Natural killer cell (primary cell): ENCODE measurements at regions of chr5 and their contacts with region 1.

Region 1: DNA sequence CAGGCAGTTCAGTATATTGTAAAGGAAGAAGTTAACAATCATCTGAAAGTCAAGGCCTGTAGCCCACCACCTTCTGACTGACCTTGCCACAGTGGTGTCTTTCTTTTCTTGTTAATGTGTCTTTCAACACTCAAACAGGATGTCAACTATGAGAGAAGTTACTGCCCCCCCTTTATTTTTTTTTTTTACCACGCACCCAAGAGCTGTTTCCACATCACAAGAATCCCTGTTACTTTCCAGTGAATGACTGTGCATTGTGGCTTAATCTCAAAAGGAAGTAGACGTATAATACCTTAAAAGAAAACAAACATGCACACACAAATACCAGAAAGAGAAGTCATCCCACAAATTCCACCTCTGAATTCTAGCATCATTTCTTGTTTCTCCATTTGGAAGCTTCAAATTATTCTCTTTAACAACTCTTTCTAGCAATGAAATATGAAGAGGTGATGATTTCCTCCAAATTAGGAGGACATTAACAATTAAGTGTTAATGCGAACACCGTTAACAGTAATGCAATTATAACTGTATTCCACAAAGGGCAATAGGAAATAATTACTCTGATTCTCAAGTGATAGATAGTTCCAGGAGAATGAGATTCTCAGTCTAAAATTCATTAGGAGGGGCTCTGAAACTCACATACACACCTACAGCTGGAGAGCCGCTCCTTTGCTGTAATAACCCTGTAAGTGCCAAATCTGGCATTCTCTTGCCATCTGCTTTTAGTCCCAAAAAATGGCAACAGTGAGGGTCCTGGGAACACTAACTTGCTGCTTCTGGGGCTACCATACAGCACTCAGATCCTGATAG is 201.0 kb downstream of the EFNA5 start:
- DNase-seq: peak in 1 of 2 donors; percentile 51
- ATAC-seq: peak; percentile 61 to 81 (median 63)
- H3K4me3 ChIP-seq: no peak overlapping the region
- H3K4me3 Mint-ChIP-seq: peak overlapping the region; percentile 74
- H3K27ac ChIP-seq: peak overlapping the region; percentile 73
- H3K27ac Mint-ChIP-seq: peak overlapping the region; percentile 84 to 97
- H3K4me1 ChIP-seq: peaks cover 54% of the 10 kb centered on the region
- H3K4me1 Mint-ChIP-seq: peaks cover 73 to 80% of the 10 kb centered on the region in 2 donors
- H3K27me3 ChIP-seq: no peaks in the 10 kb centered on the region
- H3K27me3 Mint-ChIP-seq: no peaks in the 10 kb centered on the region
- CTCF ChIP-seq: no peak

Region 2: DNA sequence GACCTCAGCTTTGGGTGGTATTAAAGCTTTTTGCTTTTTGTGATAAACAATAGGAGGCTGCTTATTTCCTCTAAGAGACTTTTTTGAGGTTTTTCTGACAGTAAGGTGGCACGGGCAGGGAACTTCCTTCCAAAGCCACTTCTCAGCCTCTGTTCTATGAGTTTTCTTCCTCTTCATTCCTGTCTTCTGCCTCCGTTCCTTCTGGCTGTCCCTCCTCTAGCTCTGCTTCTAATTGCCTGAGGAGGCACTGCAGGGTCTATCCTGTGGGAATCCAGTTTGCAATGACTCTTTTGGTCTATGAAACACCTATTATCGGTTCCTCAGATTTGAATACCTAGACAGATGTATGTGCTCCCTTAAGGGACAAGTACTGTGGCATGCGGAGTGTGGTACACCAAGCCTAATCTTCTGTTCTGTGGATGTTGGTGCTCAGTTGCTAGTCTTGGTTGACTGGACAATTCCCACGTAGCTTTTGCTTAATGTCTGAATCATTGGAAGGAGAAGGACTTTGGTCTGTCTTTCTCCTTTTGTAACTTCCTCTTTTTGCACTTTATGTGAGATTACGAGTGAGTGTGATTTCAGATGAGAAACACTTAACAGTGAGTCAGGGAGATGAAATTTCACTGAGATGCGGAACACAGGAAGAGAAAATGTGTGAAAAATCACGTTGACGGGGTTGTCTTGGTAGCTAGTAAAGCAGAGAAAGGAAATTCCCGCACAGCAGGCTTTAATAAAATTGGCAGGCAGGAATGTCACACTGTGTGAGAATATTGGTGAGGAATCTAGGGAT is 104.2 kb before region 1 on chr5:
- intact Hi-C with region 1: loop called (anchors 1 kb)
- DNase-seq: peak; percentile 21 to 45
- ATAC-seq: peak; percentile 78 to 87 (median 83)
- H3K4me3 ChIP-seq: no peak overlapping the region
- H3K4me3 Mint-ChIP-seq: peak overlapping the region; percentile 72
- H3K27ac ChIP-seq: peak overlapping the region; percentile 74
- H3K27ac Mint-ChIP-seq: peak overlapping the region; percentile 78 to 88
- H3K4me1 ChIP-seq: peaks cover 11% of the 10 kb centered on the region
- H3K4me1 Mint-ChIP-seq: peaks cover 31 to 40% of the 10 kb centered on the region in 2 donors
- H3K27me3 ChIP-seq: no peaks in the 10 kb centered on the region
- H3K27me3 Mint-ChIP-seq: no peaks in the 10 kb centered on the region
- CTCF ChIP-seq: no peak

Region 3: GRCh38 chr5:107395632-107396350 is 73.9 kb before region 1 on chr5:
- intact Hi-C with region 1: no loop called
- DNase-seq: no peak
- ATAC-seq: no peak
- H3K4me3 ChIP-seq: no peak overlapping the region
- H3K4me3 Mint-ChIP-seq: peak overlapping the region; percentile 10
- H3K27ac ChIP-seq: peak overlapping the region; percentile 37
- H3K27ac Mint-ChIP-seq: peak overlapping the region; percentile 17 to 34
- H3K4me1 ChIP-seq: no peaks in the 10 kb centered on the region
- H3K4me1 Mint-ChIP-seq: peaks cover 15 to 16% of the 10 kb centered on the region in 2 donors
- H3K27me3 ChIP-seq: no peaks in the 10 kb centered on the region
- H3K27me3 Mint-ChIP-seq: no peaks in the 10 kb centered on the region
- CTCF ChIP-seq: no peak

Region 4: DNA sequence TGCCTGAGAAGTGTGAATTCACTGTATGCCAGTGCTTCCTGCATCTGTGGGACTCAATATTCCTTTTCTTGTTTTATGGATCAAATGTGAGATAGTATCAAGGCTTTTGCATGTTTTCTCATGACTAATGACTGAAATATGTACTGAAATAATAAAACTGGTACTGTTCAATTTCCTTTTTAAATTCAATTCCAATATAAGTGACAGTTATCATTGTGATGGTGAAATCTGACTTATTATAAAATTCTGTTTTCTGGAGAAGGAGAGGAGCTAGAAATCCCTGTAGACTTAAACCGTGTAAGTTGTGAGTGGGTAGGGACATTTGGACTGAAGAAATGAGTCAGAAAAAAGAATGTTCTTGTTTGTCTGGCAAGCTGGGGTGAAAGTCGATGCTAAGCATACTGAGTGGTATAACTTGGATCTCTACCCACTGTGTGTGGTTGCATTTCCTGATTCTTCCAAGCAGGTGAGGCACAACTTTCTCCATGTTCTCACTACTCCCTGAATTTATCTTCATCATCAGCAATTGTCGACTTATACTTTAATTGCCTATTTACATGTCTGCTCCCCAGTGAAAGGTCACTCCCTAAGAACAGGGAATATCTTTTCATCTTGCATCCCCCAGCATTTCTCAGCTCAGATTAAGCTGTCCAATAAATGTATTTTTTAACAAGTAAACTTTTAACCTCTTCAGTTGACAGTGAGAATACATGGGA is 44.0 kb before region 1 on chr5:
- intact Hi-C with region 1: loop called (anchors 5 kb)
- DNase-seq: no peak
- ATAC-seq: no peak
- H3K4me3 ChIP-seq: no peak overlapping the region
- H3K4me3 Mint-ChIP-seq: no peak overlapping the region
- H3K27ac ChIP-seq: no peak overlapping the region
- H3K27ac Mint-ChIP-seq: no peak overlapping the region
- H3K4me1 ChIP-seq: no peaks in the 10 kb centered on the region
- H3K4me1 Mint-ChIP-seq: peaks cover 30 to 35% of the 10 kb centered on the region in 2 donors
- H3K27me3 ChIP-seq: no peaks in the 10 kb centered on the region
- H3K27me3 Mint-ChIP-seq: no peaks in the 10 kb centered on the region
- CTCF ChIP-seq: no peak

Region 5: GRCh38 chr5:107486489-107486888 is 16.8 kb after region 1 on chr5:
- intact Hi-C with region 1: loop called (anchors 2 kb)
- DNase-seq: peak; percentile 47 to 72
- ATAC-seq: peak; percentile 92 to 99 (median 95)
- H3K4me3 ChIP-seq: no peak overlapping the region
- H3K4me3 Mint-ChIP-seq: peak overlapping the region; percentile 45
- H3K27ac ChIP-seq: peak overlapping the region; percentile 95
- H3K27ac Mint-ChIP-seq: peak overlapping the region; percentile 88 to 98
- H3K4me1 ChIP-seq: peaks cover 19% of the 10 kb centered on the region
- H3K4me1 Mint-ChIP-seq: peaks cover 43 to 55% of the 10 kb centered on the region in 2 donors
- H3K27me3 ChIP-seq: no peaks in the 10 kb centered on the region
- H3K27me3 Mint-ChIP-seq: no peaks in the 10 kb centered on the region
- CTCF ChIP-seq: no peak

Region 6: DNA sequence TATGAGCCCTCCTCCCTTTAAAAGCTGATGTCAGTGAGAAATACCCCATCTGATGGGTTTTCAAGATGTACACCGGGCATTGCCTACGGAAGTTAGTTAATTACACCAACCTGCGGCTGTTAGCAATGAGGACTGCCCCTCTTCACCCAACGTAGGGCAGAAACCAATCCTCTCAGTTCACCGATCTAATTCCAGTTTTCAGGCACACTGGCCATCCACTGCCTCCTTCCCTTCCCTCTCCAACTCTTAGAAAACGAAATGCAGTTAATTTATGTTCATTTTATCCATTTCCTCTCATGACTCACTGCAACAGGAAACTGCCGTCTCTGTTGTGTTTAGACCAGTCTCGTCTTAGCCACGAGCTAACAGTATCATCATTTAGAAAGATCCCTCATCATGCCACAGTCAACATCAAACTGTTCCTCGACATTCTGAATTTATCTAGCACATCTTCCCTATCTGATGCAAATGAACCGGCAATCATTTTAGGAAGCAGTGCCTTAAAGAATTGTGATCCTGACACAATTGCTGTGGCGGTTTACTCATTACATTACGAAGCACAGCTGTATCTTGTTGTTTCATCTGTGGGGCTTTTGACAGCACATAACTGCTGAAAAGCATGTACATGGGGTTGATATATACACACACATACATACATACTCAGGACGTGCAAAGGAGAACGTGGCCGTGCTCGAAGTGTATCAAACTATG is 32.4 kb after region 1 on chr5:
- intact Hi-C with region 1: loop called (anchors 5 kb)
- DNase-seq: peak in 1 of 2 donors; percentile 39
- ATAC-seq: peak; percentile 88 to 93 (median 92)
- H3K4me3 ChIP-seq: no peak overlapping the region
- H3K4me3 Mint-ChIP-seq: peak overlapping the region; percentile 70
- H3K27ac ChIP-seq: peak overlapping the region; percentile 75
- H3K27ac Mint-ChIP-seq: peak overlapping the region; percentile 83 to 92
- H3K4me1 ChIP-seq: peaks cover 8% of the 10 kb centered on the region
- H3K4me1 Mint-ChIP-seq: peaks cover 26 to 29% of the 10 kb centered on the region in 2 donors
- H3K27me3 ChIP-seq: peaks cover 5% of the 10 kb centered on the region
- H3K27me3 Mint-ChIP-seq: peaks cover 0 to 3% of the 10 kb centered on the region in 2 donors
- CTCF ChIP-seq: no peak

Region 7: DNA sequence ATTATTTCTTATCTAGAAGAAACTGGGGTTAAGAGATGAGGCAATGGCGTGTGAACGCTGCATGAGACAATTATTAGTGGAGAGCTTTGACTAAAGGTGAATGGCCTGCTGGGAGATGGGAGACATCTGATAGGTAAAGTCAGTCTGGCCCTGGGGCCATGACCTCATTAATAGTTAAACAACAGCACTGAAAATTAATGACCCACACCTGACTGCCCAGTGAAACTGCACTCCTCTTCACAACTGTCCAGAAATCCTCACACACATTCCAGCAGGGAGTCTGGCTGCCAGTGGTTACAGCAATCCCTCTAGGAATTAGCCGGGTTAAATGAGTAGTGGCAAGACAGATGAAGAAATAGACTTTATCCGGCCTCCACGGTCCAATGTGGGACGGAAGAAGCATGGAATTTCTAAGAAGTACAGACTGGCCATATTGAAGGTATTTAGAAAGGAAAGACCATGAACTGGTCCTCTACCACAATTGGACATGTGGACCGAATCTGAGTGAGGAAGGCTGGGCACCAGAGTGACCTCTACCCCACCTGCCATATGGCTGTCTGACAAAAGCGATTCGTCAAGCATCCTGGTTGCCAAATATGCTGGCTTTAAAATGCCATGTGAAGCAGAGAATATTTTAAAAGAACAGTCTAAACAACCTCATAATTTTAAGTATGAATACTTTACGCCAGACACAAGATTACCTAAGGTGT is 62.6 kb after region 1 on chr5:
- intact Hi-C with region 1: no loop called
- DNase-seq: no peak
- ATAC-seq: no peak
- H3K4me3 ChIP-seq: no peak overlapping the region
- H3K4me3 Mint-ChIP-seq: no peak overlapping the region
- H3K27ac ChIP-seq: no peak overlapping the region
- H3K27ac Mint-ChIP-seq: no peak overlapping the region
- H3K4me1 ChIP-seq: no peaks in the 10 kb centered on the region
- H3K4me1 Mint-ChIP-seq: peaks cover 22 to 23% of the 10 kb centered on the region in 2 donors
- H3K27me3 ChIP-seq: no peaks in the 10 kb centered on the region
- H3K27me3 Mint-ChIP-seq: peaks cover 0 to 2% of the 10 kb centered on the region in 2 donors
- CTCF ChIP-seq: no peak